SK-N-SH (cell line): ENCODE measurements at regions of chr3 and their contacts with region 1.

Region 1: DNA sequence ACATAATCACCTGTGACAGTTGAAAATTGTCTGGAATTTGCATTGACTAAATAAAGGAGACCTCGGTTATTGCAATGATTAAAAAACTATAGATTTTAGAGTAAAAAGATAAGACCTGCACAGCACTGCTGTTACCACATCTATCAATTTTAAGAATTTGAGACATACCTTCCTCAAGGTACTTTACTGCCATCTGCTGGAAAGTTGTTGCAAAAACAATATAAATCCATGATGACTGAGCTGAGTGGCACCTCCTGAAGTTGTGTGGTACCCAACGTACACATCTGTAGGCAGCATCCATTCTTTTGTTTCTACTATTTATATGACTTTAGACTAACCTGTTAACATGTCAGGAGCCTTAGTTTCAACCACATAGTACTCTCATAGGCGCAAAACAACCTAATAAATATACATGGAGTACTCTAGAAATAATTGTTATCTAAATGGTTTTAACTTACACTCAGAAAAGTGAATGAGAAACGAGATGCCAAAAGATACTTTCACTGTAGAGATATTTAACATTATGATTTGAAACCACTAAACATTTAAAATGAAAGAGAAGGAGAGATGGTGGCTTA is 106.7 kb downstream of the GHSR start:
- DNase-seq: peak; percentile 54
- H3K4me3 ChIP-seq: no peak overlapping the region
- H3K27ac ChIP-seq: no peak overlapping the region
- H3K4me1 ChIP-seq: no peaks in the 10 kb centered on the region
- H3K27me3 ChIP-seq: no peaks in the 10 kb centered on the region
- CTCF ChIP-seq: peak; percentile 70
- EP300 ChIP-seq: no peak
- RAD21 ChIP-seq: peak; percentile 85

Region 2: GRCh38 chr3:171646357-171647133 is 695.0 kb before region 1 on chr3:
- CTCF ChIA-PET with region 1: interaction called, 21 read pairs
- POLR2A ChIA-PET with region 1: no interaction called
- DNase-seq: peak; percentile 49
- H3K4me3 ChIP-seq: no peak overlapping the region
- H3K27ac ChIP-seq: peak overlapping the region; percentile 0 to 55; a peak in 3 of 4 replicates
- H3K4me1 ChIP-seq: peaks cover 0 to 10% of the 10 kb centered on the region in 2 experiments; a peak in 2 of 4 replicates
- H3K27me3 ChIP-seq: no peaks in the 10 kb centered on the region
- CTCF ChIP-seq: peak; percentile 75
- EP300 ChIP-seq: no peak
- RAD21 ChIP-seq: peak; percentile 81

Region 3: DNA sequence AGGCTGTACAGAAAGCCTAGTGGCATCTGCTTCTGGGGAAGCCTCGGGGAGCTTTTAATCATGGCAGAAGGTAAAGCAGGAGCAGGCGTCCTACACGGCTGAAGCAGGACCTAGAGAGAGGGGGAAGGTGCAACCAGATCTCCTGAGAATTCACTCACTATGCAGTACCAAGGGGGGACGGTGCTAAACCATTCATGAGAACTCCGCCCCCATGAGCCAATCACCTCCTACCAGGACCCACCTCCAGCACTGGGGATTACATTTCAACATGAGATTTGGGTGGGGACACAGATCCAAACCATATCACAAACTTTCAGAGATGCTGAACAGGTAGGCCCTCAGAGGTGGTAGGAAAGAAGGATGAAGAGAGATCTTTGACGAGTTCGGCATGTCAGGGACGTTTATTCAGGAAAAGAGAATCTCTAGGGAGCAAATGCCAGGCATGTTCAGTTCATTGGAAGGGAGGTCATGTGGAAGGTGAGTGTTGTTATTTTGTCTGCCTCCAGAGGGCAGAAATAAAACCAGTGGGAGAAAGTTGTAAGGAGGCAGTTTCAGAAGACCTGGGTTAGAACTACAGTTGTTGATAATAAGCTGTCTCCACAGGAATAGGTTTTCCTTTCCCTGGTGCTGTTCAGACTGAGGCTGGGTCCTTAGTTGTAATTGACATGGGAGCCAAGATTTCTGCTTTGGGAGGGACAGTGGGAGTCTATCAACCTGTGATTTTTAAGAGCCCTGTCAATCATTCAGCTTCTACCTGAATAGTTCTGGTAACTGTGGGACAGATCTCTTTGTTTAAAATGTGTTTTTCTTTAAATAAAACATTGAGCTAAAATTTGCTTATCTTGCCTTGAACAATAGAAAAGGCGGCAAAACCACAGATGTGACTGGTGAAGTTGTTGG is 306.5 kb before region 1 on chr3:
- CTCF ChIA-PET with region 1: interaction called, 12 read pairs
- POLR2A ChIA-PET with region 1: no interaction called
- DNase-seq: peak; percentile 31
- H3K4me3 ChIP-seq: no peak overlapping the region
- H3K27ac ChIP-seq: no peak overlapping the region
- H3K4me1 ChIP-seq: no peaks in the 10 kb centered on the region; a peak in 1 of 4 replicates
- H3K27me3 ChIP-seq: no peaks in the 10 kb centered on the region
- CTCF ChIP-seq: peak; percentile 52
- EP300 ChIP-seq: no peak
- RAD21 ChIP-seq: peak; percentile 56

Region 4: GRCh38 chr3:172289582-172289981 is 52.0 kb before region 1 on chr3:
- CTCF ChIA-PET with region 1: interaction called, 11 read pairs
- POLR2A ChIA-PET with region 1: no interaction called
- DNase-seq: peak; percentile 27
- H3K4me3 ChIP-seq: no peak overlapping the region
- H3K27ac ChIP-seq: peak overlapping the region in 1 of 2 experiments; percentile 98; a peak in 1 of 4 replicates
- H3K4me1 ChIP-seq: peaks cover 9 to 47% of the 10 kb centered on the region in 2 experiments
- H3K27me3 ChIP-seq: no peaks in the 10 kb centered on the region
- CTCF ChIP-seq: peak; percentile 31
- EP300 ChIP-seq: no peak
- RAD21 ChIP-seq: peak; percentile 68

Region 5: GRCh38 chr3:172355839-172356238 is 14.3 kb after region 1 on chr3:
- CTCF ChIA-PET with region 1: interaction called, 28 read pairs
- POLR2A ChIA-PET with region 1: no interaction called
- DNase-seq: no peak
- H3K4me3 ChIP-seq: no peak overlapping the region
- H3K27ac ChIP-seq: peak overlapping the region; percentile 76 to 81
- H3K4me1 ChIP-seq: peaks cover 13 to 19% of the 10 kb centered on the region in 2 experiments
- H3K27me3 ChIP-seq: no peaks in the 10 kb centered on the region
- CTCF ChIP-seq: no peak
- EP300 ChIP-seq: no peak; a peak in 1 of 4 replicates
- RAD21 ChIP-seq: no peak